Endothelial cell of umbilical vein (primary cell): ENCODE measurements at regions of chr1 and their contacts with region 1.

Region 1: DNA sequence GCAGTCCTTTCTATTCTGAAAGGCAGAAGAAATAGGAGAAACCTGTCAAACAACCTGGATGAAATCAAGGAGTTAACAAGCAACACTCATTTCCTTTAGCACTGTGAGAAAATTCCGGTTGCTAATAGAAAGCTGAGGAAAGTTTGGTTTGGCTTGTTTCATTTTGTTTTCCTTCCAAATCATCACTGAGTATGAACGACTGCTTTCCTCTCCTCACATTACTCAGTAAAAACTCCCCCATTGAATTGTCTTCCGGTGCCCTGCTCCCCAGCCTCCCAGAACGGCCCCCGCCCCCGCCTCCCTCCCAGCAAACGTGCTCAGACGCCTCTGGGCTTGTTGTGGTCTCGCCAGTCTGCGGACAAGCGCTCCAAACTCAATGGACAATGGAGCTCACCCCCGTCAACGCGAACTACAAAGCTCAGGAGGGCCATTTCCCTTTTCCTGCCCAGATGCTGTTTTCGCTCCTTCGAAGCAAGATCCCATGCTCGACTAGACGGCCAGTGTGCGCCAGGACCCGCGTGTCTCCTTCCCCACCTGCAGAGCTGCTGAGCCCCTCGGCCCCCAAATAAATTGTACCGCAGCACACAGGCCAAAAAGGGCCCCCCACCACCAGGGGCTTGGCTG is 747 bp downstream of the STX6 start:
- DNase-seq: peak; percentile 96
- H3K4me3 ChIP-seq: peak overlapping the region; percentile 62 to 84 (median 79)
- H3K27ac ChIP-seq: peak overlapping the region; percentile 80
- H3K4me1 ChIP-seq: peaks cover 13% of the 10 kb centered on the region
- H3K27me3 ChIP-seq: peaks cover 5 to 11% of the 10 kb centered on the region in 2 experiments
- CTCF ChIP-seq: no peak
- POLR2A ChIP-seq: peak; percentile 55

Region 2: GRCh38 chr1:180502360-180503273 is 519.3 kb before region 1 on chr1 and contains the start of gene ACBD6:
- CTCF ChIA-PET with region 1: no interaction called
- POLR2A ChIA-PET with region 1: no interaction called
- dilution Hi-C with region 1: no loop called
- intact Hi-C with region 1: loop called (anchors 1 kb)
- DNase-seq: peak; percentile 93
- H3K4me3 ChIP-seq: peak within 1 kb of the TSS; percentile 32 to 81 (median 81)
- H3K27ac ChIP-seq: peak within 1 kb of the TSS; percentile 60
- H3K4me1 ChIP-seq: peaks cover 26% of the 10 kb centered on the region
- H3K27me3 ChIP-seq: no peaks in the 10 kb centered on the region
- CTCF ChIP-seq: peak in 1 of 2 donors; percentile 15
- POLR2A ChIP-seq: peak; percentile 18
- total RNA-seq, gene ACBD6: 52.8 and 56.4 TPM in 2 replicates

Region 3: GRCh38 chr1:180912801-180913565 is 108.9 kb before region 1 on chr1 and contains the start of gene KIAA1614:
- CTCF ChIA-PET with region 1: no interaction called
- POLR2A ChIA-PET with region 1: interaction called, 3 read pairs
- dilution Hi-C with region 1: no loop called
- intact Hi-C with region 1: loop called (anchors 2 kb)
- DNase-seq: no peak
- H3K4me3 ChIP-seq: peak within 1 kb of the TSS; percentile 23 to 56 (median 52)
- H3K27ac ChIP-seq: no peak within 1 kb of the TSS
- H3K4me1 ChIP-seq: peaks cover 5% of the 10 kb centered on the region
- H3K27me3 ChIP-seq: no peaks in the 10 kb centered on the region
- CTCF ChIP-seq: no peak
- POLR2A ChIP-seq: no peak
- total RNA-seq, gene KIAA1614: 1.7 and 2.0 TPM in 2 replicates

Region 4: DNA sequence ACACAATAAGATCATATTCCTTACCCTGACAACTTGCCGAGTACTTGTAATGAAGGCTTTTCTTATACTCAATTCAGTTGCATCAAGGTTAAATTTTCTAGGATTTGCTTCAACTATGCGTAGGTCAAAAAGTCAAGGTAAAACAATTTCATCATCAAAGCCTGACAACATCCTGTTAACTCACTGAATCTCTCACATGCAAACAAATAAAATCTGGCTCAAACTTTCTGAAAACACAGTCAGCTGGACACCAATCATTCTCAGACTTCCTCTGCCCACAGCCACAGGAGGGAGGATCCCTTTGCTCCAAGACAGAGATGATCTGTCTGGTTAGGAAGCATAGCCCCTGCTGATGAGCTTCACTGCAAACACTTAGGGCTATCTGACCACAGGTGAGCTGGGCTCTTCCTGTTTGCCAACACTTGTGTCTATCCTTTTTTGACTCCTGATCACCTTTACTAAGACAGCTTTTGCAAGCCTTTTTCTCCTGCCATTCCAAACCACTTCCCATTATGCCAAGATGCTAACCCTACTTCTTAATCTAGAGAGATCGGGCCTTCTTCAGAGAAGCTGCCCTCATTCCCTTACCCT is 19.2 kb before region 1 on chr1:
- CTCF ChIA-PET with region 1: interaction called, 4 read pairs
- POLR2A ChIA-PET with region 1: no interaction called
- dilution Hi-C with region 1: no loop called
- intact Hi-C with region 1: loop called (anchors 1 kb)
- DNase-seq: no peak
- H3K4me3 ChIP-seq: no peak overlapping the region
- H3K27ac ChIP-seq: no peak overlapping the region
- H3K4me1 ChIP-seq: no peaks in the 10 kb centered on the region
- H3K27me3 ChIP-seq: no peaks in the 10 kb centered on the region
- CTCF ChIP-seq: no peak
- POLR2A ChIP-seq: no peak

Region 5: GRCh38 chr1:181105134-181106021 is 83.5 kb after region 1 on chr1:
- CTCF ChIA-PET with region 1: interaction called, 3 read pairs
- POLR2A ChIA-PET with region 1: interaction called, 8 read pairs
- dilution Hi-C with region 1: no loop called
- intact Hi-C with region 1: loop called (anchors 1 kb)
- DNase-seq: peak; percentile 86
- H3K4me3 ChIP-seq: peak overlapping the region; percentile 44 to 63 (median 46)
- H3K27ac ChIP-seq: peak overlapping the region; percentile 90
- H3K4me1 ChIP-seq: peaks cover 58% of the 10 kb centered on the region
- H3K27me3 ChIP-seq: no peaks in the 10 kb centered on the region
- CTCF ChIP-seq: no peak
- POLR2A ChIP-seq: peak; percentile 43

Region 6: DNA sequence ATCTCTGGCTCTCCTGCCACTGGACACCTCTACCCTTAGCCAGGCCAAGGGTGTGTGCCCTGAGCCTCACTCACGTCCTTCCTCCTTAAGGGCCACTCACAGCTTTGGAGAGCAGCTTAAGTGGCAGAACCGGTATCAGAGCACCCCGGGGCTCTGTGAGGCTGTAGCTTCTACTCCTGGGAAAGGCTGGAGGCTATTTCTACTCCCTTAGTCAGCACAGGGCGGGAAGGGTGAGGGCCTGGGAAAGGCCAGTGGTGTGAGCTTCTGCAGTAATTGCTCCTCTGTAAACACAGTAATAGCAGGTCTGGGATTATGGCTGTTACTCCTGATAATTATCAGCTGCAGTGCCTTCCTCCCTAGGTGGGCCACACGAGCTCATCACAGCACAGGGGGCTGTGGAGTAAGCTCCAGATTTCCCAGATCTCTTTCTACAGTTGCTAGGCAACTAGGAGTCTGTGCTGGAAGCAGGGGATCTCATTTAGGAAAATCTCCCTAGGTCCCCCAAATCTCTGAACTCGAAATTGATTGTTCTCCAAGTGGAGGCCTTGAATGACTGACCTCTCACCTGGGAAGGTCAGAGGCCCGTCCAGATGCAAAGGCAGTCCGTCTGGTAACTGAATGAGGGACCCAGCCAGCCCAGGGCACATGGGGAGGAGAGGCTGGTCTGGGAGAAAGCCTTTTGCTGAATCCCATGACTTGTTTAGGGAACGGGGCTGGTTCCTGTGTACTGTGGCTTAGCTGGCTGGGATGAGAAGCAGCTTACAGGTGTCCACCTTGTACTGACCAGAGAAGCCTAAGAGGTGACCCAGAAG is 95.9 kb after region 1 on chr1:
- CTCF ChIA-PET with region 1: no interaction called
- POLR2A ChIA-PET with region 1: no interaction called
- dilution Hi-C with region 1: no loop called
- intact Hi-C with region 1: no loop called
- DNase-seq: no peak
- H3K4me3 ChIP-seq: no peak overlapping the region
- H3K27ac ChIP-seq: no peak overlapping the region
- H3K4me1 ChIP-seq: peaks cover 4% of the 10 kb centered on the region
- H3K27me3 ChIP-seq: no peaks in the 10 kb centered on the region
- CTCF ChIP-seq: no peak
- POLR2A ChIP-seq: no peak

Region 7: DNA sequence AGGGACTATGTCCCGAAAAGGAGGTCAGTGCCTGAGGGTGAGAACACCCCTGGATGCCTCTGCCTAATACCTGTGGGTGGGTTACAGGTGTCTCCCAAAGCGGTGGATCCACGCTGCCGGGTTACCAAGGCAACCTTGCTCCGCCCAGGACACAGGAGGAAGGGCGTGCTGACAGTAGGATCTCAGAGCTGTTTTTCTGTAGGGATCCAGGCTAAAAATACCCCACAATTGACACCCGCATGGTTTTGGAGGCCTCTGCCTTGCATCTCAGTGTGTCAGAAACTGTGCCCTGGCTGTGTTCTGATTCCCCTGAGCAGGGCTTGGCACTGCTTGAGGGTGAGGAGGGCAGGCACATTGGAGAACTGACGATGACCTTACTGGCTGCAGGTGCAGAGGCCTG is 184.6 kb after region 1 on chr1:
- CTCF ChIA-PET with region 1: no interaction called
- POLR2A ChIA-PET with region 1: no interaction called
- dilution Hi-C with region 1: no loop called
- intact Hi-C with region 1: no loop called
- DNase-seq: no peak
- H3K4me3 ChIP-seq: no peak overlapping the region
- H3K27ac ChIP-seq: no peak overlapping the region
- H3K4me1 ChIP-seq: no peaks in the 10 kb centered on the region
- H3K27me3 ChIP-seq: no peaks in the 10 kb centered on the region
- CTCF ChIP-seq: no peak
- POLR2A ChIP-seq: no peak

Region 8: GRCh38 chr1:182391362-182392044 is 1369.6 kb after region 1 on chr1 and contains the start of gene GLUL:
- CTCF ChIA-PET with region 1: no interaction called
- POLR2A ChIA-PET with region 1: no interaction called
- dilution Hi-C with region 1: no loop called
- intact Hi-C with region 1: loop called (anchors 2 kb)
- DNase-seq: peak; percentile 94
- H3K4me3 ChIP-seq: peak within 1 kb of the TSS; percentile 70 to 90 (median 76)
- H3K27ac ChIP-seq: peak within 1 kb of the TSS; percentile 81
- H3K4me1 ChIP-seq: peaks cover 4% of the 10 kb centered on the region
- H3K27me3 ChIP-seq: no peaks in the 10 kb centered on the region
- CTCF ChIP-seq: peak in 1 of 2 donors; percentile 33
- POLR2A ChIP-seq: peak; percentile 99
- total RNA-seq, gene GLUL: 181 and 187 TPM in 2 replicates